BJ (cell line): ENCODE measurements at regions of chr19 and their contacts with region 1.

Region 1: GRCh38 chr19:40777937-40778705 is at the start of gene RAB4B:
- DNase-seq: peak; percentile 98
- H3K4me3 ChIP-seq: peak within 1 kb of the TSS; percentile 83
- H3K27me3 ChIP-seq: no peaks in the 10 kb centered on the region
- CTCF ChIP-seq: no peak
- polyA plus RNA-seq, gene RAB4B: 16.5 and 25.4 TPM in 2 replicates

Region 2: DNA sequence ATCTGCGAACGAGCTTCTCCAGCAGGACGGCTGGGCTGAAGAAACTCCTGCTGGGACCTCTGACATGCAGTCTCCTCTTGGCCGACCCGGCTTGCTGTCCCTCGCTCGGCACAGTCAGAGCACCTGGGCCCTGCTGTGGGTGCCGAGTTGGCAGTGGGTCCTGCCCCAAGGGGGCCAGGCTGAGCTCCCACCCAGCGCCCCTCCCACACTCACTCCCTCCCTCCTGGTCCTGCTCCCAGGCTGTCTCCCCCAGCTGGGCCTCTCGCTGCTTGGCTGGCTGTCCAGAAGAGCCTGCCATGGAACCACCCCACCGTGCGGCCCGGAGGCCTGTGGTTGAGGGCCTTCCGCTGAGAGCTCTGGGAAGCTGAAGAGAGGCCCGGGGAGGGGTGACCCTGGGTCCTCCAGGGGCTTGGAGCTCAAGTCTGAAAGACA is 499.0 kb before region 1 on chr19:
- CTCF ChIA-PET with region 1: no interaction called
- POLR2A ChIA-PET with region 1: interaction called, 11 read pairs
- DNase-seq: no peak
- H3K4me3 ChIP-seq: peak overlapping the region; percentile 23
- H3K27me3 ChIP-seq: no peaks in the 10 kb centered on the region
- CTCF ChIP-seq: peak; percentile 29; the same call in 1 of the 2 replicates

Region 3: GRCh38 chr19:40668991-40669614 is 109.0 kb before region 1 on chr19:
- CTCF ChIA-PET with region 1: no interaction called
- POLR2A ChIA-PET with region 1: no interaction called
- DNase-seq: no peak
- H3K4me3 ChIP-seq: no peak overlapping the region
- H3K27me3 ChIP-seq: no peaks in the 10 kb centered on the region
- CTCF ChIP-seq: no peak

Region 4: GRCh38 chr19:40750059-40750873 is 27.9 kb before region 1 on chr19 and contains the start of gene ACTMAP:
- CTCF ChIA-PET with region 1: interaction called, 3 read pairs
- POLR2A ChIA-PET with region 1: interaction called, 31 read pairs
- DNase-seq: peak; percentile 99
- H3K4me3 ChIP-seq: peak within 1 kb of the TSS; percentile 72
- H3K27me3 ChIP-seq: no peaks in the 10 kb centered on the region
- CTCF ChIP-seq: no peak
- polyA plus RNA-seq, gene ACTMAP: 3.9 and 5.5 TPM in 2 replicates

Region 5: DNA sequence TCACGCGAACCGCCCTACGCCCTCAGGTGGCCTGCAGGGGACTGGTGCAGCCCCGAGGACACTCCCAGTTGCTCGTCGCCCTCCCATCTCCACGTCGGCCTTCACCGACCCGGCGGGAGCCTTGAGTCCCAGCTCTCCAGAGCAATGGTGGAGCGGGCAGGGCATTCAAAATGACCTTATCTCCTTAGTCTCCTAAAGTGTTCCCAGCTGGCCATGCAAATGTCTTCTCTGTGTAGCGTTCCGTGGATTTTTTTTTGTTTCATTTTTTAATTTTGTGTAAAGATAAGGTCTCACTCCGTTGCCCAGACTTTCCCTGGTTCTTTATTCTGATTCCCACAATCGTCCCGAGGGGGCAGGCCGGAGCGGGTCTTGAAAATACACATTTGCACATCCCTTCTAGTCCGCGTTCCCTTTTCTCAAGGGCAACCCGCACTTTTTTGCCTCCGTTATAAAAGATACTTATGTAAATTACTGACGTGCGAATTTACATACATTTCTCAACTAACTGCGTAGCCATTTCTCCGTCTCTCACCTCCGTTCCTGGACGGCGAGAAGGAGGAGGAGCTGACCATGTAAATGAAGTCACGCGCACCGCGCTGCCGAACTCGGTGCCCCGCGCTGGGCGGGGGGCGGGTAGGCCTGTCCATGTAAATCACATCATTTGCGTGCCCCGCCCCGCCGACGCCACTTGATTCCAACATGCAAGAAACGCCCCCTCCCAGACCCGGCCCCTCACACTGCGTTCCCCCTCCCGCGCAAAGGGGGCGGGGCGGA is 20.3 kb after region 1 on chr19:
- CTCF ChIA-PET with region 1: interaction called, 11 read pairs
- POLR2A ChIA-PET with region 1: interaction called, 23 read pairs
- DNase-seq: peak; percentile 97
- H3K4me3 ChIP-seq: peak overlapping the region; percentile 43
- H3K27me3 ChIP-seq: no peaks in the 10 kb centered on the region
- CTCF ChIP-seq: peak; percentile 55

Region 6: GRCh38 chr19:40806488-40807468 is 28.7 kb after region 1 on chr19:
- CTCF ChIA-PET with region 1: interaction called, 22 read pairs
- POLR2A ChIA-PET with region 1: no interaction called
- DNase-seq: peak; percentile 86
- H3K4me3 ChIP-seq: no peak overlapping the region
- H3K27me3 ChIP-seq: no peaks in the 10 kb centered on the region
- CTCF ChIP-seq: peak; percentile 95